ENCODE measurements at regions of chr7 and their contacts with region 1.

Region 1: GRCh38 chr7:101486433-101487104 is 123.9 kb downstream of the COL26A1 start:
- DNase-seq: no peak
- ATAC-seq: peak; percentile 78
- H3K4me3 ChIP-seq: no peak overlapping the region
- H3K27ac ChIP-seq: peak overlapping the region; percentile 88
- H3K4me1 ChIP-seq: peaks cover 32% of the 10 kb centered on the region
- H3K27me3 ChIP-seq: no peaks in the 10 kb centered on the region
- CTCF ChIP-seq: no peak

Region 2: DNA sequence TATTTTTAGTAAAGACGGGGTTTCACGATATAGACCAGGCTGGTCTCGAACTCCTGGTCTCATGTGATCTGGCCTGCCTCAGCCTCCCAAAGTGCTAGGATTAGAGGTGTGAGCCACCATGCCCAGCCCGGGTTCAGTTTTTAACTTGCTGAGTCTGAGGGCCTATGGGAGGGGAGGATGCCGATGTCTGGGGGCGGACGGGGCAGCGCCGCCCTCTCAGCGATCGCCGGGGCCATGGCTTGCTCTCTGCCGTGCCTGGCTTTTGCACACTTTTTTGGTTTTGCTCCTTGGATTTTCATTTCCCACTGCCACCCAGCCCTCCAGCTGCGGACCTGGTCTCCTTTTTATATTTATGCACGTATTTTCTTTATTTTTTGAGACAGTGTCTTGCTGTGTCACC is 139.1 kb before region 1 on chr7:
- CTCF ChIA-PET with region 1: no interaction called
- POLR2A ChIA-PET with region 1: no interaction called
- in situ Hi-C with region 1: no loop called
- intact Hi-C with region 1: no loop called
- DNase-seq: no peak
- ATAC-seq: no peak
- H3K4me3 ChIP-seq: no peak overlapping the region
- H3K27ac ChIP-seq: no peak overlapping the region
- H3K4me1 ChIP-seq: peaks cover 5% of the 10 kb centered on the region
- H3K27me3 ChIP-seq: no peaks in the 10 kb centered on the region
- CTCF ChIP-seq: no peak

Region 3: GRCh38 chr7:101442521-101442981 is 44.0 kb before region 1 on chr7:
- CTCF ChIA-PET with region 1: interaction called, 6 read pairs
- POLR2A ChIA-PET with region 1: interaction called, 12 read pairs
- in situ Hi-C with region 1: no loop called
- intact Hi-C with region 1: no loop called
- DNase-seq: no peak
- ATAC-seq: 0 out of 2 replicates have a peak, but pooled peaks have one; percentile 47
- H3K4me3 ChIP-seq: no peak overlapping the region
- H3K27ac ChIP-seq: peak overlapping the region; percentile 66
- H3K4me1 ChIP-seq: peaks cover 24% of the 10 kb centered on the region
- H3K27me3 ChIP-seq: no peaks in the 10 kb centered on the region
- CTCF ChIP-seq: no peak

Region 4: GRCh38 chr7:101614939-101615302 is 128.4 kb after region 1 on chr7:
- CTCF ChIA-PET with region 1: no interaction called
- POLR2A ChIA-PET with region 1: no interaction called
- in situ Hi-C with region 1: no loop called
- intact Hi-C with region 1: no loop called
- DNase-seq: no peak
- ATAC-seq: 0 out of 2 replicates have a peak, but pooled peaks have one; percentile 31
- H3K4me3 ChIP-seq: no peak overlapping the region
- H3K27ac ChIP-seq: no peak overlapping the region
- H3K4me1 ChIP-seq: peaks cover 4% of the 10 kb centered on the region; the same call in 1 of the 2 replicates
- H3K27me3 ChIP-seq: no peaks in the 10 kb centered on the region
- CTCF ChIP-seq: no peak

Measured in Panc1 (cell line).